Esophagus muscularis mucosa (tissue), 4 donors: ENCODE measurements at regions of chr15 and their contacts with region 1.

Region 1: GRCh38 chr15:49406352-49407118 is 16.5 kb upstream of the FGF7 start:
- DNase-seq: no peak
- H3K4me3 ChIP-seq: no peak overlapping the region
- H3K27ac ChIP-seq: no peak overlapping the region
- H3K4me1 ChIP-seq: no peaks in the 10 kb centered on the region
- H3K27me3 ChIP-seq: no peaks in the 10 kb centered on the region
- CTCF ChIP-seq: no peak
- EP300 ChIP-seq: no peak
- POLR2A ChIP-seq: no peak

Region 2: GRCh38 chr15:49255966-49256759 is 150.4 kb before region 1 on chr15:
- intact Hi-C with region 1: no loop called
- DNase-seq: no peak
- H3K4me3 ChIP-seq: no peak overlapping the region
- H3K27ac ChIP-seq: peak overlapping the region in 2 of 4 donors; percentile 4 to 23
- H3K4me1 ChIP-seq: peaks cover 0 to 14% (median 12%) of the 10 kb centered on the region in 4 donors
- H3K27me3 ChIP-seq: no peaks in the 10 kb centered on the region
- CTCF ChIP-seq: no peak
- EP300 ChIP-seq: no peak
- POLR2A ChIP-seq: no peak

Region 3: DNA sequence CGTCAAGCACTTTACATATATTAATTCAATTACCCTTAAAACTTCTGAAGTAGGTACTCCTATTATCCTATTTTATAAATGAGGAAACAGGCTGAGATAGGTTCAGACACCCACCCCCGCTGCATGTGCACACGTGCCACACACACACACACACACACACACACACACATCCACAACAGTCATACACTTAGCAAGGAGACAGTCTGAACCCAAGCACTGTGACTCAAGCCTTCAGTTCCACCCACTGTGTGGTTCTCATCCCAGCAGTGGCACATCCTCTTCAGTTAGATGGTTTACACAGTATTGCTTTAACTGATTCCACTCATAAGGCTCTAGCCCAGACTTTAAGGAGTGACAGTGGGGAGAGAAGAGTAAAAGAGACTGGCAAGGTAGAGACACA is 74.6 kb before region 1 on chr15:
- intact Hi-C with region 1: loop called (anchors 2 kb)
- DNase-seq: no peak
- H3K4me3 ChIP-seq: no peak overlapping the region
- H3K27ac ChIP-seq: no peak overlapping the region
- H3K4me1 ChIP-seq: no peaks in the 10 kb centered on the region
- H3K27me3 ChIP-seq: no peaks in the 10 kb centered on the region
- CTCF ChIP-seq: no peak
- EP300 ChIP-seq: no peak
- POLR2A ChIP-seq: no peak

Region 4: DNA sequence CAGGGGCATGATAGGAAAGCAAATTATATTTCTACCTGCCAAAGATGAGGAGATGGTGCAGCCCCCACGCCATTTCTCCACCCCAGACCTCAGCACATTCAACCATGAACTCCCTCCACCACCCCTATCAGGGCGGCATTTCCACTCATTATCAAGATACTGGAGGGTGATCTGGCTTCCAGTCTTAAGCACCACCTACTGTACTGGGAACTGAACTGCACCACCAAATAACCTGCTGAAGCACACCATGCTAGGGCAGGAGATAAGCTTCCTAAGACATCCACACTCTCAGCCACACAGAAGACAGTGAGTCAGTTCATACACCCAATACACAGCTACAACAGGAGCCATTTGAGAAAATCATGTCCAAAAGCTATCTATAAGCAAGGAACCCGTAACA is 115.3 kb after region 1 on chr15:
- intact Hi-C with region 1: no loop called
- DNase-seq: no peak
- H3K4me3 ChIP-seq: no peak overlapping the region
- H3K27ac ChIP-seq: no peak overlapping the region
- H3K4me1 ChIP-seq: no peaks in the 10 kb centered on the region
- H3K27me3 ChIP-seq: no peaks in the 10 kb centered on the region
- CTCF ChIP-seq: peak in 1 of 3 experiments; percentile 17
- EP300 ChIP-seq: no peak
- POLR2A ChIP-seq: no peak